Activated naive CD4-positive, alpha-beta T cell treated with anti-CD3 and anti-CD28 coated beads, Interleukin-2, amount 10 ng/mL, durations not matched to agents 7 days and 5 days (primary cell): ENCODE measurements at regions of chr9 and their contacts with region 1.

Region 1: GRCh38 chr9:137236238-137236935 is 4.7 kb upstream of the TUBB4B start:
- DNase-seq: peak; percentile 95
- H3K4me3 Mint-ChIP-seq: no peak overlapping the region
- H3K27ac Mint-ChIP-seq: no peak overlapping the region
- H3K4me1 Mint-ChIP-seq: peaks cover 22% of the 10 kb centered on the region
- H3K27me3 Mint-ChIP-seq: peaks cover 21% of the 10 kb centered on the region

Region 2: GRCh38 chr9:137129456-137130175 is 106.8 kb before region 1 on chr9:
- CTCF ChIA-PET with region 1: interaction called, 12 read pairs
- DNase-seq: peak; percentile 93
- H3K4me3 Mint-ChIP-seq: peak overlapping the region; percentile 80
- H3K27ac Mint-ChIP-seq: peak overlapping the region; percentile 88
- H3K4me1 Mint-ChIP-seq: peaks cover 30% of the 10 kb centered on the region
- H3K27me3 Mint-ChIP-seq: peaks cover 24% of the 10 kb centered on the region

Region 3: GRCh38 chr9:137254624-137255447 is 18.4 kb after region 1 on chr9 and contains the start of gene NELFB:
- CTCF ChIA-PET with region 1: interaction called, 11 read pairs
- DNase-seq: peak; percentile 96
- H3K4me3 Mint-ChIP-seq: peak within 1 kb of the TSS; percentile 91
- H3K27ac Mint-ChIP-seq: peak within 1 kb of the TSS; percentile 87
- H3K4me1 Mint-ChIP-seq: peaks cover 19% of the 10 kb centered on the region
- H3K27me3 Mint-ChIP-seq: peaks cover 9% of the 10 kb centered on the region